GM12878 (cell line): ENCODE measurements at regions of chr7 and their contacts with region 1.

Region 1: DNA sequence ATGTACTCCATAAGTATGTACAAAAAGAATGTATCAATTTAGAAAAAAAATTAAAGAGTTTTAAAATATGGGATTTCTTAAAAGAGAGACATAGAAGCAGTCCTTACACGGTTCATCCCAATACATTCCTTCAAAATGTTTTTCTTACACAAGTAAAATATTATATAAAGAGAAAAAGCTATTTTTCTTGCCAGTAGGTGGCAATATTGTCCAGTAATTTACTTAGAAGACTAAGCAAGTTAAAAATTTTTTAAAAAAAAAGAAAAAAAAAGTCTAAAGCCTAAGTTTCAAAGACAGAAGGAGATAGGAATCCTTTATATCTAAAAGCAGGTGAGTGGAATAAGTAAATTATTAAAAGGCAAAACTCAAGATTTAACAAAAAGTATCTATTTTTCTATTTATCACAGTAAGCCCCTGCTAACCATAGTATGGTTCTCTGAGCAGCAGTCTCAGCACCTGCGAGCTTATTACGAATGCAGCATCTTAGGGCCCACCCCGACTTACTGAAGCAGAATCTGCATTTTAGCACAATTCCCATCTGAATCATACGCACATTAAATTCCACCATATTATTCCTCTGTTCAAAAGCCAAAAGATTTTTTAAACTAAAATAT is 240.6 kb downstream of the DGKI start:
- DNase-seq: no peak
- ATAC-seq: peak; percentile 51; the same call in 1 of the 3 replicates
- H3K4me3 ChIP-seq: no peak overlapping the region
- H3K27ac ChIP-seq: no peak overlapping the region
- H3K4me1 ChIP-seq: no peaks in the 10 kb centered on the region
- H3K27me3 ChIP-seq: no peaks in the 10 kb centered on the region
- CTCF ChIP-seq: peak in 1 of 3 experiments; percentile 29; a peak in 2 of 6 replicates
- EP300 ChIP-seq: no peak
- POLR2A ChIP-seq: no peak
- RAD21 ChIP-seq: no peak

Region 2: DNA sequence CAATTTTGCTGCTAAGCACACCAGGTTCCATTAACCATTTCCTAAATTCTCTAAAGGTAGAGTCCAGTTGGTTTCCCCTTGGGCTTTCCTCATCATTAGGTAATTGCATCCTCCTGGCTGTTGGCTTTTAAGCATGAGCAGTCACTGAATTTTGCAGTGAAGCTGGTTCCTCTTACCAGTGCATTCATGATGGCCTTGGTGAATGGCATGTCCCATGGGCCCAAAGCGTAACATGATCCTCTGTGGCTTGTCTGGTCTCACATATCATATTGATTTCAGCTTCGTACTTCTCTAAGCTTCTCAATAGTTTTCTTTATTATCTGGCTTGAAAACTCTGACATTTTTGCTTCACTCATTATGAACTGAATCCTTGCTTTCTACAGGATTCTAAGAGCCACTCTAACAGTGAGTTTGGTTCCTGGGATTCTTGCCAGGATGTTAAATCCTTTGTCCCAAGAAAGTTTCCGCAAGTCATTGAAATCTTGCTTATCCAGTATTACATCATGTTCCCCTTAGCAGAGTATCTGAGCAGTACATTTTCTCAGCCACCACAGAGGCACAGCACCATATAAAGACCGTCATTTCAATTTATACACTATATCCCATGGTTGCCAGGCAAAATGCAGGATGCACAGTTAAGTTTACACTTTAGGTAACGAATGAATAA is 396.9 kb before region 1 on chr7:
- CTCF ChIA-PET with region 1: no interaction called
- POLR2A ChIA-PET with region 1: no interaction called
- RAD21 ChIA-PET with region 1: no interaction called
- SMC1A ChIA-PET with region 1: no interaction called
- in situ Hi-C with region 1: no loop called
- intact Hi-C with region 1: no loop called
- DNase-seq: no peak
- ATAC-seq: no peak
- H3K4me3 ChIP-seq: no peak overlapping the region
- H3K27ac ChIP-seq: no peak overlapping the region
- H3K4me1 ChIP-seq: no peaks in the 10 kb centered on the region
- H3K27me3 ChIP-seq: no peaks in the 10 kb centered on the region
- CTCF ChIP-seq: no peak
- EP300 ChIP-seq: no peak
- POLR2A ChIP-seq: no peak
- RAD21 ChIP-seq: no peak

Region 3: GRCh38 chr7:137462074-137462715 is 144.0 kb before region 1 on chr7:
- CTCF ChIA-PET with region 1: no interaction called
- POLR2A ChIA-PET with region 1: no interaction called
- RAD21 ChIA-PET with region 1: no interaction called
- SMC1A ChIA-PET with region 1: no interaction called
- in situ Hi-C with region 1: no loop called
- intact Hi-C with region 1: no loop called
- DNase-seq: no peak
- ATAC-seq: no peak
- H3K4me3 ChIP-seq: no peak overlapping the region
- H3K27ac ChIP-seq: no peak overlapping the region
- H3K4me1 ChIP-seq: no peaks in the 10 kb centered on the region
- H3K27me3 ChIP-seq: no peaks in the 10 kb centered on the region; a peak in 1 of 4 replicates
- CTCF ChIP-seq: no peak
- EP300 ChIP-seq: no peak
- POLR2A ChIP-seq: no peak
- RAD21 ChIP-seq: no peak

Region 4: DNA sequence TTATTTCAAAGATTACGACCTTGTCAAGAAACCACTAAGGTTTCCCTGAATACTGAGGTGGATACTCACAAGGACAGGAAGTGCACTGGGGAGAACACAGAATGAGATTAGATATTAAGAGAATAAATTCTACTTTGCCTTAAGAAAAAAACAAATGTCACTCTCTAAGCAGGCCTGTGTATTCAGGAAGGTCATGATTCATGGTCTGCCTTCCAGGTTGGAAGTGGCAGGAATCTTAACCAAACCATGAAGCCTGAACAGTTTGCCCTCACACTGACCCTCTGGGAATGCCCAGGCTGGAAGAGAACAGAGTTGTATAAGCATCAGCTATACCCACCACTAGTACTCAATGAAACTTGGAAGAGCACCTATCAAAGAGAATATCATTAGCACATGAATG is 13.0 kb after region 1 on chr7:
- CTCF ChIA-PET with region 1: interaction called, 14 read pairs
- POLR2A ChIA-PET with region 1: no interaction called
- RAD21 ChIA-PET with region 1: interaction called, 6 read pairs
- SMC1A ChIA-PET with region 1: interaction called, 14 read pairs
- in situ Hi-C with region 1: no loop called
- intact Hi-C with region 1: no loop called
- DNase-seq: no peak
- ATAC-seq: no peak
- H3K4me3 ChIP-seq: no peak overlapping the region
- H3K27ac ChIP-seq: no peak overlapping the region
- H3K4me1 ChIP-seq: no peaks in the 10 kb centered on the region
- H3K27me3 ChIP-seq: no peaks in the 10 kb centered on the region; a peak in 1 of 4 replicates
- CTCF ChIP-seq: no peak
- EP300 ChIP-seq: no peak
- POLR2A ChIP-seq: no peak
- RAD21 ChIP-seq: no peak

Region 5: DNA sequence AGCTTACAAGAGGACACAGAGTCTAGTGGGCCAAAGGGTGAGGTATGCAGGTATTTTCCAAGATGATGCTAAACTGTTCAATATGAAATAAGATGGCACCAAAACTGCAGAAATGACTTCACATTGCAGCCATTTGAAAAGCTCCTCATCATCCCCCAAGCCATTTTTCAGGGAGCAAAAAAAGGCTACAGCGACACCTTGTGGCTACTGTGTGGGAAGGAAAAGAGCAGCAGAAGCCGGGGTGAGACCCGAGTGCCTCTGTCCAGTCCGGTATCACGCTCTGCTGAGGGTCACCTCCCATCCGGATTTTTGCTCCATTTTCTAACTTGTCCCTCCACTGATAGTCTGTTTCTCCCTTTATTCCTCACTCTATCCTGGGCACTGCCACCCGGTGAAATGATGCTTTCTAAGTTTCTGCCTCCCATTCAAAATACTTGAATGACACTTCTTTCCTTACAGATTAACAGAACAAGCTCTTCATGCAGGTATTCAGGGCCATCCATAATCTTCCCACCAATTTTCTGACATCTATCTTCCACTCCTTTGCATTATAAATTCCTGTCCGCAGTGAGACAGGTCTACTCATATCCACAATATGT is 20.4 kb after region 1 on chr7:
- CTCF ChIA-PET with region 1: interaction called, 48 read pairs
- POLR2A ChIA-PET with region 1: no interaction called
- RAD21 ChIA-PET with region 1: interaction called, 5 read pairs
- SMC1A ChIA-PET with region 1: interaction called, 7 read pairs
- in situ Hi-C with region 1: no loop called
- intact Hi-C with region 1: loop called (anchors 2 kb)
- DNase-seq: peak; percentile 12
- ATAC-seq: peak; percentile 92
- H3K4me3 ChIP-seq: no peak overlapping the region
- H3K27ac ChIP-seq: no peak overlapping the region
- H3K4me1 ChIP-seq: no peaks in the 10 kb centered on the region
- H3K27me3 ChIP-seq: no peaks in the 10 kb centered on the region
- CTCF ChIP-seq: peak; percentile 65 to 77 (median 76)
- EP300 ChIP-seq: no peak
- POLR2A ChIP-seq: no peak
- RAD21 ChIP-seq: peak; percentile 64

Region 6: DNA sequence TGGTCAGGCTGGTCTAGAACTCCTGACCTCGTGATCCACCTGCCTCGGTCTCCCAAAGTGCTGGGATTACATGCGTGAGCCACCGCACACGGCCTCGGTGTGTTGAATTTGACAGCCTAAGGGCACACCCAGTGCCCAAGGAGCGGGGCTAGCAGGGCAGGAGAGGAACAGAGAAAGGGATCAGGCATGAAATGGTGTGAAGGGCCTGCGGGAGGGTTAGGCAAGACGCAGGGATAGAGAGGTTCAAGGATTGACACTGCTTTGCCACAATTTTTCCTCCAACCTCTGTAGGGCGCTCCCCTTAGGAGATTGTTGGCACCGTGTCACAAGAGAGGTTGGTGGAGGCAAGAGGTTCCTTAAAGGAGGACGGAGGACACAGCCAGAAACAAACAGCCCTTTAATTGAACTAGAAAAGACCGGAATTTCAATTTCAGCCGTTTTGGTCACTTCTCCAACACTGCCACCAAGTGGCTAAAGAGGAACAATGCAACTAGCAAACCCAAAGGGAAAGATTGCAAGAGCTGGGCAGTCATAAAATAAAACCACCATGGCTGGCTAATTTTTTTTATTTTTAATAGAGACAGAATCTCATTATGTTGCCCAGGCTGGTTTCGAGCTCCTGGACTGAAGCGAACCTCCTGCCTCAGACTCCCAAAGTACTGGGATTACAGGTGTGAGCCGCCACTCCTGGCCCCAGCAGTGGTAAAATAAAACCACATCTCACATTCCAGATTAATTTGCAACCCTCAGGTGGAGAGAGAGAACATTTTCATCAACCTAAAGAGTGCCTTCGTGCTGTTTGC is 402.6 kb after region 1 on chr7:
- CTCF ChIA-PET with region 1: interaction called, 9 read pairs
- POLR2A ChIA-PET with region 1: interaction called, 3 read pairs
- RAD21 ChIA-PET with region 1: interaction called, 14 read pairs
- SMC1A ChIA-PET with region 1: interaction called, 21 read pairs
- in situ Hi-C with region 1: no loop called
- intact Hi-C with region 1: loop called (anchors 2 kb)
- DNase-seq: no peak
- ATAC-seq: peak; percentile 86
- H3K4me3 ChIP-seq: no peak overlapping the region
- H3K27ac ChIP-seq: no peak overlapping the region
- H3K4me1 ChIP-seq: no peaks in the 10 kb centered on the region
- H3K27me3 ChIP-seq: no peaks in the 10 kb centered on the region
- CTCF ChIP-seq: peak; percentile 80 to 84 (median 80)
- EP300 ChIP-seq: no peak; a peak in 1 of 4 replicates
- POLR2A ChIP-seq: no peak
- RAD21 ChIP-seq: peak; percentile 100